ENCODE measurements at regions of chr18 and their contacts with region 1.

Region 1: GRCh38 chr18:13746633-13747032 is 20.2 kb downstream of the RNMT start:
- DNase-seq: no peak
- H3K4me3 ChIP-seq: no peak overlapping the region
- H3K27ac ChIP-seq: no peak overlapping the region
- H3K4me1 ChIP-seq: no peaks in the 10 kb centered on the region
- H3K27me3 ChIP-seq: no peaks in the 10 kb centered on the region

Region 2: GRCh38 chr18:12783524-12783923 is 963.1 kb before region 1 on chr18:
- in situ Hi-C with region 1: no loop called
- DNase-seq: no peak
- H3K4me3 ChIP-seq: no peak overlapping the region
- H3K27ac ChIP-seq: no peak overlapping the region
- H3K4me1 ChIP-seq: no peaks in the 10 kb centered on the region
- H3K27me3 ChIP-seq: no peaks in the 10 kb centered on the region

Region 3: DNA sequence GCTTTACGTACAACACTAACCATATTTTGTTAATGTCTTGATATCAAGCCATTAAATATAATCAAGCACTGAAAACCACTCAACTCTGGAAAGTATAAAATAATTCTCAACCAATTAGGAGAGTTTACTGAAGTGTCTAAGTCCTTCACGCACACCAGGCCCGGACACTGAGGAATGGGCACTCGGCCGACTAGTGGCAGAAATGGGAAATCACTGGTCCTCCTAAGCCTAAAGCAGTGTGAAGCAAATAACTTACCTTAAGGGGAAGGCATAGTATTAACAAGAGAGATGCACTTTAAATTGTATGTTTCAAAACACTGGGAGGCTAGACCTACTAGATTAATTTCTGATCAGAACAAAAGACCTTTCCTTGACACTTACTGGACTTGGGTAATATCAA is 66.0 kb before region 1 on chr18:
- in situ Hi-C with region 1: loop called (anchors 10 kb)
- DNase-seq: no peak
- H3K4me3 ChIP-seq: no peak overlapping the region
- H3K27ac ChIP-seq: no peak overlapping the region
- H3K4me1 ChIP-seq: no peaks in the 10 kb centered on the region
- H3K27me3 ChIP-seq: no peaks in the 10 kb centered on the region

Measured in GM23248 (cell line).